ENCODE measurements at regions of chr1 and their contacts with region 1.

Region 1: GRCh38 chr1:244801246-244801645 is 34.2 kb upstream of the COX20 start:
- DNase-seq: peak in 8 of 9 experiments; percentile 32 to 81 (median 66)
- ATAC-seq: peak; percentile 96
- H3K4me3 ChIP-seq: no peak overlapping the region
- H3K4me3 Mint-ChIP-seq: no peak overlapping the region
- H3K27ac ChIP-seq: no peak overlapping the region
- H3K27ac Mint-ChIP-seq: no peak overlapping the region
- H3K4me1 ChIP-seq: no peaks in the 10 kb centered on the region
- H3K4me1 Mint-ChIP-seq: peaks cover 4% of the 10 kb centered on the region
- H3K27me3 ChIP-seq: peaks cover 0 to 4% of the 10 kb centered on the region in 2 experiments
- H3K27me3 Mint-ChIP-seq: peaks cover 12% of the 10 kb centered on the region
- CTCF ChIP-seq: peak; percentile 75

Region 2: GRCh38 chr1:243343970-243344937 is 1457.0 kb before region 1 on chr1:
- CTCF ChIA-PET with region 1: no interaction called
- POLR2A ChIA-PET with region 1: no interaction called
- intact Hi-C with region 1: loop called in 1 of 2 experiments (anchors 10 kb)
- DNase-seq: peak in 2 of 9 experiments; percentile 47 to 66
- ATAC-seq: peak; percentile 49
- H3K4me3 ChIP-seq: no peak overlapping the region
- H3K4me3 Mint-ChIP-seq: no peak overlapping the region
- H3K27ac ChIP-seq: no peak overlapping the region
- H3K27ac Mint-ChIP-seq: no peak overlapping the region
- H3K4me1 ChIP-seq: no peaks in the 10 kb centered on the region
- H3K4me1 Mint-ChIP-seq: no peaks in the 10 kb centered on the region
- H3K27me3 ChIP-seq: no peaks in the 10 kb centered on the region
- H3K27me3 Mint-ChIP-seq: no peaks in the 10 kb centered on the region
- CTCF ChIP-seq: peak; percentile 90

Region 3: DNA sequence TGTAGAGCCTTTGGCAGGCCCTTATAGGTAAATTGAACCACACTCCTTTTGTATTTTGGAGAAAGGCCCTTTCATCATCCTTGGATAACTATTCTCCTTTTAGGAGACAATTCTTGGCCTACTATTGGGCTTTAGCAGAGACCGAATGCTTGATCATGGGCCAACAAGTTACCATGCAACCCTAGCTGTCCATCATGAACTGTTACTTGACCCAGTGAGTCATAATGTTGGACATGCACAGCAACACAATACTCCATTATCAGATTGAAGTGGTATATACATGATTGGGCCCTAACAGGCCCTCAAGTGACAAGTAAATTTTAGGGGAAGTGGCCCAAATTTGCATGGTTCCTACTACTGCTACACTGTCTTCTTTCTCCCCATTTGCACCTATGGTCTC is 255.7 kb before region 1 on chr1:
- CTCF ChIA-PET with region 1: no interaction called
- POLR2A ChIA-PET with region 1: no interaction called
- intact Hi-C with region 1: no loop called
- DNase-seq: no peak
- ATAC-seq: no peak
- H3K4me3 ChIP-seq: no peak overlapping the region
- H3K4me3 Mint-ChIP-seq: no peak overlapping the region
- H3K27ac ChIP-seq: no peak overlapping the region
- H3K27ac Mint-ChIP-seq: no peak overlapping the region
- H3K4me1 ChIP-seq: no peaks in the 10 kb centered on the region
- H3K4me1 Mint-ChIP-seq: no peaks in the 10 kb centered on the region
- H3K27me3 ChIP-seq: no peaks in the 10 kb centered on the region
- H3K27me3 Mint-ChIP-seq: no peaks in the 10 kb centered on the region
- CTCF ChIP-seq: no peak

Region 4: GRCh38 chr1:244614113-244614836 is 187.0 kb before region 1 on chr1:
- CTCF ChIA-PET with region 1: interaction called, 12 read pairs
- POLR2A ChIA-PET with region 1: no interaction called
- intact Hi-C with region 1: no loop called
- DNase-seq: no peak
- ATAC-seq: no peak
- H3K4me3 ChIP-seq: no peak overlapping the region
- H3K4me3 Mint-ChIP-seq: no peak overlapping the region
- H3K27ac ChIP-seq: no peak overlapping the region
- H3K27ac Mint-ChIP-seq: no peak overlapping the region
- H3K4me1 ChIP-seq: no peaks in the 10 kb centered on the region
- H3K4me1 Mint-ChIP-seq: no peaks in the 10 kb centered on the region
- H3K27me3 ChIP-seq: no peaks in the 10 kb centered on the region
- H3K27me3 Mint-ChIP-seq: no peaks in the 10 kb centered on the region
- CTCF ChIP-seq: no peak

Region 5: DNA sequence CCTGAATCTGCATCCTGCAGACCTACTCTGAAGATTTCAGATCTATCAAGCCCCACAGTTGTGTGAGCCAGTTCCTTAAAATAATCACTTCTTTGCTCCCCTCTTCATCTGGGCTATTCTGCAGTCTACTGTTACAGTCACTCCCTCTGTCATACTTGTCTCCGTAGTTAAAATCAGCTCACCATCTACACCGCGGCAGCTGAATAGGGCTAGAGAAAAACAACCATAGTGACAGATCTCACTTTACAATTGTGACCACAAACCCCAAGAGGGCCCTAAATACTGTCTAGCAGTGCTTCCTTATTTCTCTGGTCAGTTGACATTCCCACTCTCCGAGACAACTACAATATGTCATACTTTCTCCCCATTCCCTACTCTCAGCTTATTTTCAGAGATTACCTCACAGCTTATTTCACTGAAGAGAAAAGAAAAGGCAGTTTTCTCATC is 135.5 kb before region 1 on chr1:
- CTCF ChIA-PET with region 1: no interaction called
- POLR2A ChIA-PET with region 1: no interaction called
- intact Hi-C with region 1: no loop called
- DNase-seq: peak in 2 of 9 experiments; percentile 24 to 41
- ATAC-seq: peak; percentile 31
- H3K4me3 ChIP-seq: no peak overlapping the region
- H3K4me3 Mint-ChIP-seq: no peak overlapping the region
- H3K27ac ChIP-seq: no peak overlapping the region
- H3K27ac Mint-ChIP-seq: no peak overlapping the region
- H3K4me1 ChIP-seq: peaks cover 5% of the 10 kb centered on the region
- H3K4me1 Mint-ChIP-seq: peaks cover 29% of the 10 kb centered on the region
- H3K27me3 ChIP-seq: no peaks in the 10 kb centered on the region
- H3K27me3 Mint-ChIP-seq: no peaks in the 10 kb centered on the region
- CTCF ChIP-seq: no peak

Region 6: DNA sequence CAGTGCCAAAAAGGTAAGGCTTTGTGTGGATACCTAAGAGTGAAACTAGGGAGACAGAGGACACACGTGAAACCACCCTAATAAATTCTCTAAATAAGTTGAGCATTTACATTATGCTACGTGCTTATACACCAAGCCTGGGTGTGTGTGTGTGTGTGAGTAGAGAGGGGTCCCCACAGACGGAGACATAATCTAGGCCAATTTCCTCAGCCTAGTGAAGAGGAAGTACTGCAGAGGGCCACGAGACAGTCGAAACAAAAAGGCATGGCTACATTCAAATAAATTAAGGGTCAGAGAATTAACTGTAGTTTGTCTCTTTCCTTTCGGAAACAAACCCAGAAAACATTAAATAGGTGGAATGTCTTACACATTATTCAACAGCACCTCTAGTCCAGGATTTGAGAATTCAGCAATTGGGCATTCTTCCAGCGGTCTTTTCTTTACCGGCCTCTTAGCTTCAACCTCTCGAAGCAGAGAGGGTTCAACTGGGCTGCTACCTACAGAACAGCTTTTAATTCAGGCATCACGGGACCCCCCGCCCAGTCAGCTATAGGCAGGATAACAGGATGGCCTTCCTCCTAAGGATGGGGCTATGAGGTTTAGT is 73.3 kb before region 1 on chr1:
- CTCF ChIA-PET with region 1: no interaction called
- POLR2A ChIA-PET with region 1: no interaction called
- intact Hi-C with region 1: no loop called
- DNase-seq: no peak
- ATAC-seq: no peak
- H3K4me3 ChIP-seq: no peak overlapping the region
- H3K4me3 Mint-ChIP-seq: peak overlapping the region; percentile 24
- H3K27ac ChIP-seq: no peak overlapping the region
- H3K27ac Mint-ChIP-seq: no peak overlapping the region
- H3K4me1 ChIP-seq: peaks cover 6% of the 10 kb centered on the region
- H3K4me1 Mint-ChIP-seq: peaks cover 8% of the 10 kb centered on the region
- H3K27me3 ChIP-seq: no peaks in the 10 kb centered on the region
- H3K27me3 Mint-ChIP-seq: peaks cover 11% of the 10 kb centered on the region
- CTCF ChIP-seq: no peak

Region 7: DNA sequence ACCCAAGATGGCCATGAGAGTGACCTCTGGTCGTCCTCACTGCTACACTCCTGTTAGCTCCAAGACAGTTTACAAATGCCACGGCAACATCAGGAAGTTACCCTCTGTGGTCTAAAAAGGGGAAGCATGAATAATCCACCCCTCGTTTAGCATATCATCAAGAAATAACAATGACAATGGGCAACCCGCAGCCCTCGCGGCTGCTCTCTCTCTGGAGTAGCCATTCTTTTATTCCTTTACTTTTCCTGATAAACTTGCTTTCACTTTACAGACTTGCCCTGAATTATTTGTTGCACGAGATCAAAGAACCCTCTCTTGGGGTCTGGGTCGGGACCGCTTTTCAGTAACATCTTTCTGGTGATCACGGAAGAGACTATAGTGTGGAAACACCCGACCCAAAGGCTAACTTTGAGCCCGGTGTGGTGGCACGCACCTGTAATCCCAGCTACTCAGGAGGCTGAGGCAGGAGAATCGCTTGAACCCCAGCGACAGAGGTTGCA is 14.4 kb after region 1 on chr1:
- CTCF ChIA-PET with region 1: interaction called, 13 read pairs
- POLR2A ChIA-PET with region 1: interaction called, 4 read pairs
- intact Hi-C with region 1: no loop called
- DNase-seq: no peak
- ATAC-seq: no peak
- H3K4me3 ChIP-seq: no peak overlapping the region
- H3K4me3 Mint-ChIP-seq: peak overlapping the region; percentile 15
- H3K27ac ChIP-seq: no peak overlapping the region
- H3K27ac Mint-ChIP-seq: no peak overlapping the region
- H3K4me1 ChIP-seq: no peaks in the 10 kb centered on the region
- H3K4me1 Mint-ChIP-seq: peaks cover 4% of the 10 kb centered on the region
- H3K27me3 ChIP-seq: peaks cover 0 to 4% of the 10 kb centered on the region in 2 experiments
- H3K27me3 Mint-ChIP-seq: peaks cover 12% of the 10 kb centered on the region
- CTCF ChIP-seq: no peak

Region 8: DNA sequence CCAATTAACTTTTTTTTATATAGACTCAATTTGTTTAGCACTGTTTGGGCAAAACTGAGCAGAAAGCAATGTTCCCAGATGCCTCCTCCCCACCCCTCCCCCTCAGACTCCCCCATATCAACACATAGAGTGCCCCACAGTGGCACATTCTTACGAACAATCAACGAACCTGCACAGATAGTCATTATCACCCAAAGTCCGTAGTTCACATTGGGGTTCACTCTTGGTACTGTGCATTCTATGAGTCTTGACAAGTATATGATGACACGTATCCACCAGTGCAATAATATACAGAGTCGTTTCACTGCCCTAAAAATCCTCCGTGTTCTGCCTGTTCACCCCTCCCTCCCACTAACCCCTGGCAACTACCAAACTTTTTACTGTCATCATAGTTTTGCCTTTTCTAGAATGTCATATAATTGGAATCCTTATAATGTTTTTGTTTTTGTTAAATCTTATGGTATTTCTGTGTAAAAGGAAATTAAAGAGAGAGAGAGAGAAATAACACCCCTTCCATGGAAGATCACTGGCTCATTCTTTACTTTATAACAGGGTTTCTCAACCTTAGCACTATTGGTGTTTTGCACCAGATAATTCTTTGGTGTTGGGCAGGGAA is 100.3 kb after region 1 on chr1:
- CTCF ChIA-PET with region 1: no interaction called
- POLR2A ChIA-PET with region 1: no interaction called
- intact Hi-C with region 1: loop called in 1 of 2 experiments (anchors 1 kb)
- DNase-seq: peak in 2 of 9 experiments; percentile 6 to 21
- ATAC-seq: no peak
- H3K4me3 ChIP-seq: no peak overlapping the region
- H3K4me3 Mint-ChIP-seq: no peak overlapping the region
- H3K27ac ChIP-seq: no peak overlapping the region
- H3K27ac Mint-ChIP-seq: no peak overlapping the region
- H3K4me1 ChIP-seq: no peaks in the 10 kb centered on the region
- H3K4me1 Mint-ChIP-seq: no peaks in the 10 kb centered on the region
- H3K27me3 ChIP-seq: no peaks in the 10 kb centered on the region
- H3K27me3 Mint-ChIP-seq: no peaks in the 10 kb centered on the region
- CTCF ChIP-seq: no peak

Region 9: GRCh38 chr1:244957525-244957924 is 156.3 kb after region 1 on chr1:
- CTCF ChIA-PET with region 1: no interaction called
- POLR2A ChIA-PET with region 1: no interaction called
- intact Hi-C with region 1: no loop called
- DNase-seq: no peak
- ATAC-seq: no peak
- H3K4me3 ChIP-seq: no peak overlapping the region
- H3K4me3 Mint-ChIP-seq: no peak overlapping the region
- H3K27ac ChIP-seq: no peak overlapping the region
- H3K27ac Mint-ChIP-seq: no peak overlapping the region
- H3K4me1 ChIP-seq: no peaks in the 10 kb centered on the region
- H3K4me1 Mint-ChIP-seq: no peaks in the 10 kb centered on the region
- H3K27me3 ChIP-seq: no peaks in the 10 kb centered on the region
- H3K27me3 Mint-ChIP-seq: peaks cover 3% of the 10 kb centered on the region
- CTCF ChIP-seq: no peak

Region 10: GRCh38 chr1:245036102-245036501 is 234.9 kb after region 1 on chr1:
- CTCF ChIA-PET with region 1: interaction called, 180 read pairs
- POLR2A ChIA-PET with region 1: no interaction called
- intact Hi-C with region 1: no loop called
- DNase-seq: no peak
- ATAC-seq: no peak
- H3K4me3 ChIP-seq: no peak overlapping the region
- H3K4me3 Mint-ChIP-seq: no peak overlapping the region
- H3K27ac ChIP-seq: no peak overlapping the region
- H3K27ac Mint-ChIP-seq: no peak overlapping the region
- H3K4me1 ChIP-seq: no peaks in the 10 kb centered on the region
- H3K4me1 Mint-ChIP-seq: no peaks in the 10 kb centered on the region
- H3K27me3 ChIP-seq: no peaks in the 10 kb centered on the region
- H3K27me3 Mint-ChIP-seq: no peaks in the 10 kb centered on the region
- CTCF ChIP-seq: no peak

Region 11: GRCh38 chr1:245051349-245052221 is 250.3 kb after region 1 on chr1:
- CTCF ChIA-PET with region 1: interaction called, 13 read pairs
- POLR2A ChIA-PET with region 1: interaction called, 3 read pairs
- intact Hi-C with region 1: no loop called
- DNase-seq: peak in 1 of 9 experiments; percentile 23
- ATAC-seq: no peak
- H3K4me3 ChIP-seq: no peak overlapping the region
- H3K4me3 Mint-ChIP-seq: peak overlapping the region; percentile 46
- H3K27ac ChIP-seq: no peak overlapping the region
- H3K27ac Mint-ChIP-seq: no peak overlapping the region
- H3K4me1 ChIP-seq: peaks cover 11% of the 10 kb centered on the region
- H3K4me1 Mint-ChIP-seq: peaks cover 13% of the 10 kb centered on the region
- H3K27me3 ChIP-seq: peaks cover 0 to 2% of the 10 kb centered on the region in 2 experiments
- H3K27me3 Mint-ChIP-seq: peaks cover 4% of the 10 kb centered on the region
- CTCF ChIP-seq: no peak

Measured in CD8-positive, alpha-beta T cell (primary cell).